Activated naive CD4-positive, alpha-beta T cell treated with anti-CD3 and anti-CD28 coated beads for 36 hours (primary cell): ENCODE measurements at regions of chr12 and their contacts with region 1.

Region 1: DNA sequence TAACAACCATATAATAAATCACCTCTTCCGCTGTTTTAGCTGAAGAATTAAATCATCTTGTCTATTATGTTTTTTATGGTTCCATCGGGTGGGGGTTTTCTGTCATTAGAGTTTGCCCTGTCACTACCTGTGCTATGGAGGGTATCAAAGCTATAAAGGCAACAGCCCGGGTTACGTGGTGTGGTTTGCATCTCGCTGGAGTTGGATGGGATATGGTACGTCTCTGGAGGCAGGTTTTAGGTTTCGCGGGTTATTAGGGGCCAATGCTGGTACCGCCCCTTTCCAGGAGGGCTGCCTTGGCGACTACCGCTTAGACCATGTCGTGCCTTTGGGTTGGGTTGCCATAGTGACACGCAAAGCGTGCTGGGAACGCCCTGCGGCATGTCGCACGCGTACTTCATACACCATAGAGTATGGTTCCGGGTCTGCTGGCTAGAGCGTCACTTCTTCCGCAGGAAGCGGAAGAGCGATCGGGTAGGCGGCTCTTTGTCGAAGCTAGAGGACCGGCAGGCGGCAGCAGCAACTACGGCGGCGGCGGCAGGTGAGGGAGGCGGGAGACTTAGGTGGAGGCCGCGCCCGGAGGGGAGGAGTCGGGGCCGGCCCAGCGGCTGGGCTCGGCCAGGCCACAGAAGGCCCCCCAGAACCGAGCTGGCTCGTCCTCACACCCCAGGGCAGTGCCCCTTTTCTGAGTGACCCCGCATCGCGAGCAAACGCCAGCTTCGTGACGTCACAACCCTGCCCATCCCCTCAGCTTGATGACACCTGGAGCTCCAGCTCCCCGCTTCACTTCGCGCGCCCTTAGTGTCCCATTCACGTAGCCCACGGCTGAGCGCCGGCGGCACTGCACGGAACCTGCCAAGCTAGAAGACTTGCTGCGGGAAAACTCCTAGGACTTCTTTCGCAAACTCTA is at the start of gene ZC3H10:
- DNase-seq: peak; percentile 99
- H3K4me3 Mint-ChIP-seq: peak within 1 kb of the TSS; percentile 97
- H3K27ac Mint-ChIP-seq: peak within 1 kb of the TSS; percentile 99
- H3K4me1 Mint-ChIP-seq: peaks cover 23% of the 10 kb centered on the region
- H3K27me3 Mint-ChIP-seq: no peaks in the 10 kb centered on the region
- total RNA-seq, gene ZC3H10: 6.4 to 6.6 TPM

Region 2: GRCh38 chr12:55738123-55739024 is 379.7 kb before region 1 on chr12:
- CTCF ChIA-PET with region 1: interaction called, 6 read pairs
- intact Hi-C with region 1: loop called (anchors 1 kb)
- DNase-seq: peak; percentile 89
- H3K4me3 Mint-ChIP-seq: peak overlapping the region; percentile 75
- H3K27ac Mint-ChIP-seq: peak overlapping the region; percentile 82
- H3K4me1 Mint-ChIP-seq: peaks cover 22% of the 10 kb centered on the region
- H3K27me3 Mint-ChIP-seq: no peaks in the 10 kb centered on the region

Region 3: GRCh38 chr12:55973598-55974307 is 144.3 kb before region 1 on chr12 and contains the start of gene RAB5B:
- CTCF ChIA-PET with region 1: interaction called, 4 read pairs
- intact Hi-C with region 1: loop called (anchors 1 kb)
- DNase-seq: peak; percentile 99
- H3K4me3 Mint-ChIP-seq: no peak within 1 kb of the TSS
- H3K27ac Mint-ChIP-seq: no peak within 1 kb of the TSS
- H3K4me1 Mint-ChIP-seq: peaks cover 24% of the 10 kb centered on the region
- H3K27me3 Mint-ChIP-seq: no peaks in the 10 kb centered on the region
- total RNA-seq, gene RAB5B: 33.2 to 35.7 TPM

Region 4: DNA sequence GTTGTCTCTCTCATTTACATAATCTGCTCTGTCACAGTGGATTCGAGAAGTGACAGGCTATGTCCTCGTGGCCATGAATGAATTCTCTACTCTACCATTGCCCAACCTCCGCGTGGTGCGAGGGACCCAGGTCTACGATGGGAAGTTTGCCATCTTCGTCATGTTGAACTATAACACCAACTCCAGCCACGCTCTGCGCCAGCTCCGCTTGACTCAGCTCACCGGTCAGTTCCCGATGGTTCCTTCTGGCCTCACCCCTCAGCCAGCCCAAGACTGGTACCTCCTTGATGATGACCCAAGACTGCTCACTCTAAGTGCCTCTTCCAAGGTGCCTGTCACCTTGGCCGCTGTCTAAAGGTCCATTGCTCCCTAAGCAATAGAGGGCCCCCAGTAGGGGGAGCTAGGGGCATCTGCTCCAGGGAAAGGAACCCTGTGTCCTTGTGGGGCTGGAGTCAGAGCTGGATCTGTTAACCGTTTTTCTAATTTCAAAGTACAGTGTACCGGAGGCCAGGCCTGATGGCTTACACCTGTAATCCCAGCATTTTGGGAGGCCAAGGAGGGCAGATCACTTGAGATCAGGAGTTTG is 33.0 kb before region 1 on chr12:
- CTCF ChIA-PET with region 1: no interaction called
- intact Hi-C with region 1: loop called (anchors 1 kb)
- DNase-seq: peak; percentile 55
- H3K4me3 Mint-ChIP-seq: no peak overlapping the region
- H3K27ac Mint-ChIP-seq: no peak overlapping the region
- H3K4me1 Mint-ChIP-seq: peaks cover 8% of the 10 kb centered on the region
- H3K27me3 Mint-ChIP-seq: peaks cover 13% of the 10 kb centered on the region

Region 5: GRCh38 chr12:56158029-56158925 is 40.2 kb after region 1 on chr12 and contains the start of gene MYL6:
- CTCF ChIA-PET with region 1: interaction called, 17 read pairs
- intact Hi-C with region 1: no loop called
- DNase-seq: peak; percentile 98
- H3K4me3 Mint-ChIP-seq: peak within 1 kb of the TSS; percentile 96
- H3K27ac Mint-ChIP-seq: peak within 1 kb of the TSS; percentile 95
- H3K4me1 Mint-ChIP-seq: peaks cover 42% of the 10 kb centered on the region
- H3K27me3 Mint-ChIP-seq: no peaks in the 10 kb centered on the region
- total RNA-seq, gene MYL6: 841 to 868 TPM

Region 6: GRCh38 chr12:56299853-56300643 is 182.0 kb after region 1 on chr12 and contains the start of gene CS:
- CTCF ChIA-PET with region 1: no interaction called
- intact Hi-C with region 1: loop called (anchors 1 kb)
- DNase-seq: peak; percentile 99
- H3K4me3 Mint-ChIP-seq: peak within 1 kb of the TSS; percentile 91
- H3K27ac Mint-ChIP-seq: peak within 1 kb of the TSS; percentile 92
- H3K4me1 Mint-ChIP-seq: peaks cover 42% of the 10 kb centered on the region
- H3K27me3 Mint-ChIP-seq: no peaks in the 10 kb centered on the region
- total RNA-seq, gene CS: 330 to 336 TPM

Region 7: GRCh38 chr12:56636675-56637540 is 518.9 kb after region 1 on chr12:
- CTCF ChIA-PET with region 1: no interaction called
- intact Hi-C with region 1: loop called (anchors 5 kb)
- DNase-seq: peak; percentile 97
- H3K4me3 Mint-ChIP-seq: peak overlapping the region; percentile 86
- H3K27ac Mint-ChIP-seq: peak overlapping the region; percentile 91
- H3K4me1 Mint-ChIP-seq: peaks cover 62% of the 10 kb centered on the region
- H3K27me3 Mint-ChIP-seq: no peaks in the 10 kb centered on the region